Ascending aorta (tissue), 2 donors: ENCODE measurements at regions of chr9 and their contacts with region 1.

Region 1: DNA sequence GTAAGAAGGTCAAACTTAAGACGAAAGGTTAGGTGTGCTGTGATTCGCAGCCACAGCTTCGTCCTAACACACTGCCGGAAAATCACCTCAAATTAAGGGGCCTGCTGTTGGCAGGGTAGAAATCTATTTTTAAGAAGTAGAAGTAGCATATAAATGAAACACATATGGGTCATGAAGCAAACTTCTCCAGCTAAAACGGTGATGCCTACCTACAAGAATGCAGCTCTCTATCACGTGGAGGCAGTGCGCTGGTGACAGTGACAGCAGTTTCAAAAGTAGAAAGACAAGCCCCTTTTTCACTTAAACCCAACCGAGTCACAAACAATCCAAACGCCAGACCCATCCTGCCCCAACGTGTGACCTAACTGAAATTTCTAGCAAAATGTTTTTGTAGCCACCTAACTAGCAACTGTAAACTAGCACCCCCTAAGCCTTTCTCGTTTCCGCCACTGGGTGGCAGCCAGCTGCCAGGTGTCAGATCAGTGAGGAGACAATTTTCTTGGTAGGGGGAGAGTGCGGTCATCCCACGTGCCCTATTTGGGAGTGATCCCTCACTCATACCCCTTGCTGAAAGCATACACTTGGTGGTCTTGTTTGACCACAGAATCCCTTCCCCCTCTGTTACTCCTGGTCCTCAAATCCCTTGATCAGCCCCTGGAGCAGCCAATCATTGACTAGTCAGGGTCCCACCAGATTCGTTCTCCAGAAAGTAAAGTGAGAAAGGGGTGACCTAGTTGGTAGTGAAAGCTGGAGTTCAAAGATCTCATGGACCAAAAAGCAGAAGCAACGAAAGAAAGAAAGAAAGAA is 71.8 kb upstream of the MAMDC2 start:
- DNase-seq: peak; percentile 24 to 83
- H3K4me3 ChIP-seq: no peak overlapping the region
- H3K27ac ChIP-seq: no peak overlapping the region
- H3K4me1 ChIP-seq: no peaks in the 10 kb centered on the region
- H3K27me3 ChIP-seq: no peaks in the 10 kb centered on the region
- CTCF ChIP-seq: peak; percentile 71 to 87 (median 86)

Region 2: GRCh38 chr9:69951411-69951810 is 20.4 kb before region 1 on chr9:
- intact Hi-C with region 1: no loop called
- DNase-seq: no peak
- H3K4me3 ChIP-seq: no peak overlapping the region
- H3K27ac ChIP-seq: no peak overlapping the region
- H3K4me1 ChIP-seq: no peaks in the 10 kb centered on the region
- H3K27me3 ChIP-seq: no peaks in the 10 kb centered on the region
- CTCF ChIP-seq: no peak

Region 3: DNA sequence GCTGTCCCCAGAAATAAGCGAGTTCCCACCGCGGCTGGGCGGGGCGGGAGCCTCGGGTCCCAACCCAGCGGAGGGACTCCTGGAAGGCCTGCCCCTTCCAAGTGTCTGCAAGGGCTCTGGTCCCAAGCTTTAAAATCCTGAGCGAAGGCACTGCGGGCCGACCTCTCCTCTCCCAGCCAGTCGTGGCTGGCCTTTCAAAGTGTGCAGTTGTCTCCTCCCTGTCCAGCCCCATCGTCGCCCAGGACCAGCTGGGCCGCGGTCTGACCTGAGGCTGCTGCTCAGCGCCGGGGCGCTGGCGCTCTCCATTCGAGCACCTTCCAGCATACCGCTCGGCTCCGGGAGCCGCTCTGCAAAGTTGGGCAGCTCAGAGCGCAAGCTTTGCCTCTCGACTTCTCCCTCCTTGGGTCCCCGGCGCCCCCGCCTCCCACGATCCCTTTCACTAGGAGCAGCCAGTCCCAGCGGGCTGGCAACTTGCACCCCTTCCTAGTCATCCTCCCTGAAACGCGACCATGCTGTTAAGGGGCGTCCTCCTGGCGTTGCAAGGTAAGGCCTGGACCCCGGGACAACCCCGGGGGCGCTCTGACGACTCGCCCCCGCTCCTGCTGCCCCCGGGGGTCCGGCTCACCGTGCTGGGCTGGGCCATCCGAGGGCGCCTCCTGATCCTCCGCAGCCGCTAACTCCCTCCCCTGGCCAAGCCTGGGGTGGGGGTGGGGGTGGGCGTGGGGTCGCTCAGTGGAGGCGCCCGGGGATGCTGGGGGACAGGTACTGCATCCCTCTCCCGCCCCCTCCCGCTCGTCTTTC is 72.0 kb after region 1 on chr9 and contains the start of gene MAMDC2:
- intact Hi-C with region 1: loop called (anchors 5 kb)
- DNase-seq: peak in 1 of 2 donors; percentile 71
- H3K4me3 ChIP-seq: peak within 1 kb of the TSS; percentile 62 to 85
- H3K27ac ChIP-seq: peak within 1 kb of the TSS; percentile 56 to 61
- H3K4me1 ChIP-seq: peaks cover 7 to 21% of the 10 kb centered on the region in 2 donors
- H3K27me3 ChIP-seq: no peaks in the 10 kb centered on the region
- CTCF ChIP-seq: no peak
- total RNA-seq, gene MAMDC2: 3.4 TPM

Region 4: DNA sequence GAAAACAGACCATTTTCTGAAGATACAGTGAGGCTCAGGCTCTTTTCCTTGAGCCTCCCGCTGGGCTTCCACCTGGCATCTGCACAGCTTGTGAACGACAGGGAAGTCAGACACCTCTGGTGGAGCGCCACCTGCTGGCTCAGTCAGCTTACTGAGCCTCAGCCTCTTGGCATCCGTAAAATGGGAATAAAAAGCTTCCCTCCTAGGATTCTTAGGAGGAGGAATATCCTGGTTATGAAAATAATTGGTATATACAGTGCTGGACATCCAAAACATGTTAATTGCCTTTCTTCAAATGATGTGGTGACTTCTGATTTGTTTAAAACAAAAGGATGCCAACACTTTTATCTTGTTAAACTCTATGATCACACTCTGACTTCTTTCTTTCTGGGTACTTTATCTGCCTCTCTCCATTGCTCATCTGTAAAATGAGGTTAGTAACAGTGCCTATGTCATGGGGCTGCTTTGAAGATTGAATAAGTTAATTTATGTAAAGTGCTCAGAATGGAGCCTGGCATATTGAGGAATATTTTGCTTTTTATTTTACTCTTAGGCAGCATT is 139.3 kb after region 1 on chr9:
- intact Hi-C with region 1: loop called (anchors 1 kb)
- DNase-seq: peak in 1 of 2 donors; percentile 85
- H3K4me3 ChIP-seq: no peak overlapping the region
- H3K27ac ChIP-seq: no peak overlapping the region
- H3K4me1 ChIP-seq: no peaks in the 10 kb centered on the region
- H3K27me3 ChIP-seq: no peaks in the 10 kb centered on the region
- CTCF ChIP-seq: peak; percentile 74 to 90 (median 79)

Region 5: DNA sequence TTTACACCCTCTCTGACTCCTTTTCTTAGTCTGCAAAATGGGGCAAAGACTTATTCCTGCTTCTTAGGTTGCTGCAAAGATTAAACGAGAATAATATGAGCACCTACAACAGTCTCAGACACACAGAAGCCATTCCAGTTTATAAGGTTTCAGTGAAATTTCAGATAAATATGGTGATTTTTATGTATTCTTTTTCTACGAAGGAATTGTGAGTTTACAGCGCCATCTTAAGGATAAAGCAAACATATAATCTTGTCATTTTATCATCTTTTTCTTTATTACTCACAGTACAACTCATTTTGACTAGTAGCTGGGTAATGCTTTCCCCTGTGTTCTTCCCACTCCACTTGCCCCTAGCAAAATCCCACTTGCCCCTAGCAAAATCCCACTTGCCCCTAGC is 257.7 kb after region 1 on chr9:
- intact Hi-C with region 1: loop called (anchors 5 kb)
- DNase-seq: no peak
- H3K4me3 ChIP-seq: peak overlapping the region in 1 of 2 donors; percentile 9
- H3K27ac ChIP-seq: peak overlapping the region in 1 of 2 donors; percentile 56
- H3K4me1 ChIP-seq: peaks cover 0 to 10% of the 10 kb centered on the region in 2 donors
- H3K27me3 ChIP-seq: no peaks in the 10 kb centered on the region
- CTCF ChIP-seq: peak in 1 of 3 experiments; percentile 28

Region 6: GRCh38 chr9:70455993-70456704 is 484.3 kb after region 1 on chr9:
- intact Hi-C with region 1: no loop called
- DNase-seq: peak in 1 of 2 donors; percentile 18
- H3K4me3 ChIP-seq: no peak overlapping the region
- H3K27ac ChIP-seq: peak overlapping the region; percentile 5 to 21
- H3K4me1 ChIP-seq: peaks cover 2 to 6% of the 10 kb centered on the region in 2 donors
- H3K27me3 ChIP-seq: no peaks in the 10 kb centered on the region
- CTCF ChIP-seq: no peak

Region 7: GRCh38 chr9:70609542-70610286 is 637.9 kb after region 1 on chr9:
- intact Hi-C with region 1: loop called (anchors 10 kb)
- DNase-seq: no peak
- H3K4me3 ChIP-seq: no peak overlapping the region
- H3K27ac ChIP-seq: no peak overlapping the region
- H3K4me1 ChIP-seq: peaks cover 3 to 10% of the 10 kb centered on the region in 2 donors
- H3K27me3 ChIP-seq: no peaks in the 10 kb centered on the region
- CTCF ChIP-seq: no peak